ENCODE measurements at regions of chr17 and their contacts with region 1.

Region 1: GRCh38 chr17:50853015-50853615 is 13.0 kb downstream of the TOB1 start:
- DNase-seq: no peak
- ATAC-seq: no peak
- H3K4me3 ChIP-seq: no peak overlapping the region
- H3K27ac ChIP-seq: no peak overlapping the region
- H3K4me1 ChIP-seq: peaks cover 3% of the 10 kb centered on the region; the same call in 1 of the 2 replicates
- H3K27me3 ChIP-seq: no peaks in the 10 kb centered on the region; a peak in 1 of 4 replicates
- CTCF ChIP-seq: no peak
- EP300 ChIP-seq: no peak
- POLR2A ChIP-seq: no peak
- RAD21 ChIP-seq: no peak

Region 2: DNA sequence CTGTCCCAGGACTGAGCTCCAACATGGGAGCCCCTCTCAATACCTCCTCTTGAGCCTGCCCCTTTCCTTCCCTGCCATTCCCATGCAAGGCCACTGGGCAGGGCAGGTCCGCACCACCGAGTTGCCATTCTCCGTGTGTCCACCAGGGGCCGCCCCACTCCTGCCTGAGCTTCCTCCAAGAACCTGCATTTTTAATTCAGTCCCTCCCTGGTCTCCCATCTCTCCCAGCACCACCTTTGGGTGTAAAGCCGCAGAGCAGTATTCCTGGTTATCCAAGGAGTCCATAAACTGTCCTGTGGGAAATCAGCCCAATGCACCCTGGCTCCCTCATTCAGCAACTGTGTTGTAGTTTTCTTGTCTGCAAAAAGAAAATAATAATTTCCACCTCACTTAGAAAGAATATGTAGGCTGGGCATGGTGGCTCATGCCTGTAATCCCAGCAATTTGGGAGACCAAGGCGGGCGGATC is 69.9 kb before region 1 on chr17:
- CTCF ChIA-PET with region 1: interaction called, 17 read pairs
- POLR2A ChIA-PET with region 1: no interaction called
- RAD21 ChIA-PET with region 1: interaction called, 4 read pairs
- SMC1A ChIA-PET with region 1: interaction called, 3 read pairs
- in situ Hi-C with region 1: no loop called
- intact Hi-C with region 1: no loop called
- DNase-seq: peak; percentile 31
- ATAC-seq: peak; percentile 98
- H3K4me3 ChIP-seq: no peak overlapping the region
- H3K27ac ChIP-seq: no peak overlapping the region
- H3K4me1 ChIP-seq: no peaks in the 10 kb centered on the region; the same call in 1 of the 2 replicates
- H3K27me3 ChIP-seq: no peaks in the 10 kb centered on the region
- CTCF ChIP-seq: peak; percentile 99 to 100 (median 99); a peak in 5 of 6 replicates
- EP300 ChIP-seq: no peak
- POLR2A ChIP-seq: no peak
- RAD21 ChIP-seq: peak; percentile 98

Region 3: GRCh38 chr17:50865984-50866774 is 13.1 kb after region 1 on chr17 and contains the start of gene TOB1:
- CTCF ChIA-PET with region 1: interaction called, 85 read pairs
- POLR2A ChIA-PET with region 1: interaction called, 31 read pairs
- RAD21 ChIA-PET with region 1: interaction called, 19 read pairs
- SMC1A ChIA-PET with region 1: interaction called, 46 read pairs
- in situ Hi-C with region 1: no loop called
- intact Hi-C with region 1: no loop called
- DNase-seq: peak; percentile 84
- ATAC-seq: peak; percentile 88
- H3K4me3 ChIP-seq: peak within 1 kb of the TSS; percentile 92
- H3K27ac ChIP-seq: peak within 1 kb of the TSS; percentile 98
- H3K4me1 ChIP-seq: peaks cover under 1% of the 10 kb centered on the region; the same call in 1 of the 2 replicates
- H3K27me3 ChIP-seq: no peaks in the 10 kb centered on the region
- CTCF ChIP-seq: no peak
- EP300 ChIP-seq: no peak; a peak in 1 of 4 replicates
- POLR2A ChIP-seq: peak; percentile 99
- RAD21 ChIP-seq: no peak
- polyA plus RNA-seq, gene TOB1: 19.5 to 28.3 TPM

Region 4: DNA sequence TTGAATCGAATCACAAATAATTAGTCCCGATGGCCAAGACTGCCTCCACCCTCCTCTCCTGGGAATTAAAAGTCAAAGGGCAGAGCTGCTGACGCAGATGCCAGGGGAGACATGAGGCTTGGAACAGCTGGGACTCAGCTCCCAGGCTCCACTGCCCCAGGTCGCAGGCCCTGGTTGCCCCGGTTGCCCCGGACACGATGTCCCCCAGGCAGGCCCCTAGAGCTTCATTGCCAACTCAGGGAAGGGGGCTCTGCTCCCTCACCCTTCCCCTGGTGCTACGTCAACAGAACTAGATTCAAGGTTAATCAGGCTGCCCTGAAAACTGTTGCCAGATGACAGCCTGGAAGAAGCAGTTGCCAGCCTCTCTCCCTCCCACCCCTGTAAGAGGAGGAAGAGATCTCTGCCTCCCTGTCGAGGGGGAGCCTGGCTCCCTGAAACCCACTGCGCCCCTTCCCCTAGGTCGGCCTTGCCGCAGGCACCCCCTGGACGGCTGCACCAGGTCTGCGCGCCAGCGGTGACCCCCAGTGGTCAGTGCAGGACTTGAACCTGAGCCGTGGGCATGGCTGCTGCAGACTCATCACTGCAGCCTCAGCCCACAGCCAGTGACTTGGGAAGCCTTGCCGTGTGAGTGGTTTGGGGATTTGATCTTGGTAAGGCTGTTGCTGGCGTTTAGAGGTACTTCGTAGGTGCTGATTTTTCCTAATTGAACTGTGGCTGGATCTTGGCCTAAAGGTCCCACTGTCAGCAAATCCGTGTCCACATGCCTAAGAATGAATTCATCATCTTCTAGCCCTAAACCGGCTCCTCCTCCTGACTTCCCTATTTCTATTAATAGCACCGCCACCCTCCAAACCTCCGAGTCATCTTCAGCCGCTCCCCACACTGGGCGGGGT is 97.1 kb after region 1 on chr17:
- CTCF ChIA-PET with region 1: interaction called, 309 read pairs
- POLR2A ChIA-PET with region 1: no interaction called
- RAD21 ChIA-PET with region 1: interaction called, 34 read pairs
- SMC1A ChIA-PET with region 1: interaction called, 67 read pairs
- in situ Hi-C with region 1: loop called (anchors 5 kb)
- intact Hi-C with region 1: loop called (anchors 1 kb)
- DNase-seq: no peak
- ATAC-seq: peak; percentile 95
- H3K4me3 ChIP-seq: no peak overlapping the region
- H3K27ac ChIP-seq: no peak overlapping the region
- H3K4me1 ChIP-seq: peaks cover 20% of the 10 kb centered on the region
- H3K27me3 ChIP-seq: no peaks in the 10 kb centered on the region
- CTCF ChIP-seq: peak; percentile 66 to 76 (median 66)
- EP300 ChIP-seq: no peak
- POLR2A ChIP-seq: no peak
- RAD21 ChIP-seq: peak; percentile 88

Region 5: GRCh38 chr17:50963139-50963538 is 110.0 kb after region 1 on chr17:
- CTCF ChIA-PET with region 1: interaction called, 309 read pairs
- POLR2A ChIA-PET with region 1: no interaction called
- RAD21 ChIA-PET with region 1: interaction called, 40 read pairs
- SMC1A ChIA-PET with region 1: interaction called, 12 read pairs
- in situ Hi-C with region 1: no loop called
- intact Hi-C with region 1: no loop called
- DNase-seq: no peak
- ATAC-seq: no peak
- H3K4me3 ChIP-seq: no peak overlapping the region
- H3K27ac ChIP-seq: no peak overlapping the region
- H3K4me1 ChIP-seq: no peaks in the 10 kb centered on the region
- H3K27me3 ChIP-seq: no peaks in the 10 kb centered on the region
- CTCF ChIP-seq: no peak
- EP300 ChIP-seq: no peak
- POLR2A ChIP-seq: no peak
- RAD21 ChIP-seq: no peak

Region 6: GRCh38 chr17:51056813-51057510 is 203.8 kb after region 1 on chr17:
- CTCF ChIA-PET with region 1: interaction called, 24 read pairs
- POLR2A ChIA-PET with region 1: no interaction called
- RAD21 ChIA-PET with region 1: interaction called, 4 read pairs
- SMC1A ChIA-PET with region 1: interaction called, 14 read pairs
- in situ Hi-C with region 1: no loop called
- intact Hi-C with region 1: no loop called
- DNase-seq: no peak
- ATAC-seq: peak; percentile 86
- H3K4me3 ChIP-seq: no peak overlapping the region
- H3K27ac ChIP-seq: no peak overlapping the region
- H3K4me1 ChIP-seq: peaks cover 24% of the 10 kb centered on the region
- H3K27me3 ChIP-seq: no peaks in the 10 kb centered on the region
- CTCF ChIP-seq: peak; percentile 57 to 71 (median 71)
- EP300 ChIP-seq: no peak
- POLR2A ChIP-seq: no peak
- RAD21 ChIP-seq: peak; percentile 87